ENCODE measurements at regions of chr2 and their contacts with region 1.

Region 1: GRCh38 chr2:218292048-218293014 is at the start of gene TMBIM1:
- DNase-seq: peak; percentile 77

Region 2: GRCh38 chr2:218395797-218396687 is 103.7 kb after region 1 on chr2:
- in situ Hi-C with region 1: loop called (anchors 10 kb)
- DNase-seq: peak; percentile 99

Measured in KBM-7 (cell line).